PC-3 (cell line): ENCODE measurements at regions of chr1 and their contacts with region 1.

Region 1: GRCh38 chr1:199132006-199132405 is 493.2 kb downstream of the PTPRC start:
- DNase-seq: no peak
- ATAC-seq: no peak
- H3K4me3 ChIP-seq: no peak overlapping the region
- H3K27ac ChIP-seq: no peak overlapping the region
- H3K4me1 ChIP-seq: no peaks in the 10 kb centered on the region
- H3K27me3 ChIP-seq: no peaks in the 10 kb centered on the region
- CTCF ChIP-seq: no peak

Region 2: GRCh38 chr1:199226163-199226562 is 94.2 kb after region 1 on chr1:
- CTCF ChIA-PET with region 1: no interaction called
- POLR2A ChIA-PET with region 1: no interaction called
- intact Hi-C with region 1: loop called (anchors 10 kb)
- DNase-seq: peak; percentile 75
- ATAC-seq: peak; percentile 95
- H3K4me3 ChIP-seq: peak overlapping the region; percentile 29; the same call in 1 of the 2 replicates
- H3K27ac ChIP-seq: peak overlapping the region; percentile 90
- H3K4me1 ChIP-seq: peaks cover 22% of the 10 kb centered on the region
- H3K27me3 ChIP-seq: no peaks in the 10 kb centered on the region
- CTCF ChIP-seq: no peak